ENCODE measurements at regions of chr12 and their contacts with region 1.

Region 1: GRCh38 chr12:40175045-40175444 is 49.8 kb upstream of the LRRK2 start:
- DNase-seq: no peak
- H3K4me3 ChIP-seq: no peak overlapping the region
- H3K27ac ChIP-seq: no peak overlapping the region
- H3K4me1 ChIP-seq: no peaks in the 10 kb centered on the region
- H3K27me3 ChIP-seq: no peaks in the 10 kb centered on the region
- CTCF ChIP-seq: no peak
- POLR2A ChIP-seq: no peak

Region 2: DNA sequence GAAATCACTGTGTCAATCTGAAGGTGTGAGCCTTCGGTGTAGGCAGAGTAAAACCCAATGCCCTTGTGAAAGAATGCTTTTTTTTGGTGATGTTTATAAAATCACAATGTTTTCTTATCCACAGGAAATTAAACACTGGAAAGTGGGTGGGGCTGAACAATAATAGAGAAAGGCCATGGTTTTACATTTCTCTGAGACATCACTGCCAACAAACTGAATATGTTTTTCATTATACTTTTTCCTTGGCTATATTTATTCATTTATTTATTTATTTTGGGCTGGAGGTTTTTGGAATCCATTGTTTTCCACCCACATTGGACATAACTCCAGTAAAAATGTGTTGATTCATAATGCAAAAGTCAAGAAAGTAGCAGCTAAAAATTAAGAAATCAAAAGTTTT is 66.7 kb after region 1 on chr12:
- intact Hi-C with region 1: loop called (anchors 2 kb)
- DNase-seq: no peak
- H3K4me3 ChIP-seq: no peak overlapping the region
- H3K27ac ChIP-seq: no peak overlapping the region
- H3K4me1 ChIP-seq: no peaks in the 10 kb centered on the region
- H3K27me3 ChIP-seq: no peaks in the 10 kb centered on the region
- CTCF ChIP-seq: no peak
- POLR2A ChIP-seq: no peak

Region 3: GRCh38 chr12:40253936-40254335 is 78.9 kb after region 1 on chr12:
- intact Hi-C with region 1: no loop called
- DNase-seq: no peak
- H3K4me3 ChIP-seq: no peak overlapping the region
- H3K27ac ChIP-seq: no peak overlapping the region
- H3K4me1 ChIP-seq: no peaks in the 10 kb centered on the region
- H3K27me3 ChIP-seq: no peaks in the 10 kb centered on the region
- CTCF ChIP-seq: no peak
- POLR2A ChIP-seq: no peak

Region 4: GRCh38 chr12:40474630-40475029 is 299.6 kb after region 1 on chr12:
- intact Hi-C with region 1: no loop called
- DNase-seq: no peak
- H3K4me3 ChIP-seq: no peak overlapping the region
- H3K27ac ChIP-seq: no peak overlapping the region
- H3K4me1 ChIP-seq: no peaks in the 10 kb centered on the region
- H3K27me3 ChIP-seq: no peaks in the 10 kb centered on the region
- CTCF ChIP-seq: no peak
- POLR2A ChIP-seq: no peak